ENCODE measurements at regions of chr9 and their contacts with region 1.

Region 1: DNA sequence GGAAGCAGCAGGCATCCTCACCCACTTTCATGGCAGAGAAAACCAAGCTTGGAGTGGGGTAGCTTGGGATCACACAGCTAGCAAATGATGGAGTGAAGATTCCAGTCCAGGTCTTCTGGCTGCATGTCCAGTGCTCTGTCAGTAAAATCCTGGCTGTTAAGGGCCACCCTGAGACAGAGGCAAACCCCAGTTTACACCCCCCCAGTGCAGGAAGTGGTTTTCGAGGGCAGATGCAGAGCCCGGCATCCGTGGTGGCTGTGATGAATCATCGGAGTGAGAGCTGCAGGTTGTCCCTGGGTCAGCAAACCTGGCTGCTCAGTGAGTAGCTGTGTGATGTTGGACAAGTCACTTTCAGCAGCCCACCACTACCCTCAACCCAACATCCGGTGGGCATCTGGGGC is 115.4 kb downstream of the RGS3 start:
- DNase-seq: peak; percentile 43
- H3K4me3 ChIP-seq: no peak overlapping the region
- H3K27ac ChIP-seq: peak overlapping the region; percentile 94
- H3K4me1 ChIP-seq: peaks cover 98% of the 10 kb centered on the region
- H3K27me3 ChIP-seq: no peaks in the 10 kb centered on the region
- CTCF ChIP-seq: no peak

Region 2: DNA sequence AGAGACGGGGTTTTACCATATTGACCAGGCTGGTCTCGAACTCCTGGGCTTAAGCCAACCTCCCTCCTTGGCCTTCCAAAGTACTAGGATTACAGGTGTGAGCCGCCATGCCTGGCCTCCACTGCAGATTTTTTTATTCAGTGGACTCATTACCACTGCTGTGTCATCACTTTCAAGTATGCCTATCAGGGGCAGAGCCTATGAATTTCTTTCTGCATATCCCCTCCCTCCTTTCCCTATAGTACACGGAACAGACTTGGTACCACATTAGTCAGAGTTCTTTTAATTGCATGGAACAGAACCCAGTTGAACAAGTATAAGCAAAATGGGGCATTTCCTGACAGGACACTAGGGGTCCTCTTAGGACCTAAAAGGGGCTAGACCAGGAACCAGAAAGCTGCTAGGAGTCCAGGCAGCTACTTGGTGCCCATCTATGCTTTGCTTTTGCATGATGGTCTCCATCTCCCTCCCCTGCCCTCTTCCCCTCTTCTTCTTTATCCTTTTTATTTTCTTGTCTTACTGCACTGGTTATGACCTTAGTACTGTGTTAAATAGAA is 223.8 kb before region 1 on chr9:
- intact Hi-C with region 1: no loop called
- DNase-seq: no peak
- H3K4me3 ChIP-seq: no peak overlapping the region
- H3K27ac ChIP-seq: no peak overlapping the region
- H3K4me1 ChIP-seq: peaks cover 5% of the 10 kb centered on the region
- H3K27me3 ChIP-seq: peaks cover 62% of the 10 kb centered on the region
- CTCF ChIP-seq: no peak

Region 3: GRCh38 chr9:113523421-113524236 is 55.3 kb before region 1 on chr9:
- intact Hi-C with region 1: loop called (anchors 10 kb)
- DNase-seq: peak; percentile 60
- H3K4me3 ChIP-seq: peak overlapping the region; percentile 33
- H3K27ac ChIP-seq: peak overlapping the region; percentile 84
- H3K4me1 ChIP-seq: peaks cover 99% of the 10 kb centered on the region
- H3K27me3 ChIP-seq: no peaks in the 10 kb centered on the region
- CTCF ChIP-seq: no peak